ENCODE measurements at regions of chr3 and their contacts with region 1.

Region 1: GRCh38 chr3:55721716-55722484 is 234.8 kb upstream of the WNT5A start:
- DNase-seq: peak; percentile 27
- H3K4me3 ChIP-seq: no peak overlapping the region
- H3K27ac ChIP-seq: no peak overlapping the region
- H3K4me1 ChIP-seq: no peaks in the 10 kb centered on the region
- H3K27me3 ChIP-seq: peaks cover 4% of the 10 kb centered on the region
- CTCF ChIP-seq: peak; percentile 73 to 76

Region 2: DNA sequence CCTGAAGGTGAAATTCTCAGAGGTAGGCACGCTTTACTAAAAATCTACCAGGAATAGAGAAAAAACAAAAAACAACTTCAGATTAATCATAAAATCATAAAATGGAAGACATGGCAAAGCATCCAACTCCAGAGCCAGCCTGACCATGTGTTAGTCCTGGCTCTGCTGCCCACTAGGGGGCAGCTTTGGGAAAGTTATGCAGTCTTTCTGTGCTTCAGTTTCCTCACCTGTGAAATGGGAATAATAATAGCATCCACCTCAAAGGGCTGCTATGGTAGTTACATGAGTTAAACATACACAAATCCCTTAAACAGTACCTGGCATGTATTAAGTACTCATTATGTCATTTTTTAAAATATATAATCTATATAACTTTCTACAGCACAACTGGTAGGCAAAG is 287.1 kb before region 1 on chr3:
- CTCF ChIA-PET with region 1: no interaction called
- dilution Hi-C with region 1: no loop called
- in situ Hi-C with region 1: no loop called
- intact Hi-C with region 1: loop called (anchors 2 kb)
- DNase-seq: peak; percentile 28
- H3K4me3 ChIP-seq: no peak overlapping the region
- H3K27ac ChIP-seq: no peak overlapping the region
- H3K4me1 ChIP-seq: no peaks in the 10 kb centered on the region
- H3K27me3 ChIP-seq: no peaks in the 10 kb centered on the region
- CTCF ChIP-seq: peak; percentile 64 to 75

Region 3: DNA sequence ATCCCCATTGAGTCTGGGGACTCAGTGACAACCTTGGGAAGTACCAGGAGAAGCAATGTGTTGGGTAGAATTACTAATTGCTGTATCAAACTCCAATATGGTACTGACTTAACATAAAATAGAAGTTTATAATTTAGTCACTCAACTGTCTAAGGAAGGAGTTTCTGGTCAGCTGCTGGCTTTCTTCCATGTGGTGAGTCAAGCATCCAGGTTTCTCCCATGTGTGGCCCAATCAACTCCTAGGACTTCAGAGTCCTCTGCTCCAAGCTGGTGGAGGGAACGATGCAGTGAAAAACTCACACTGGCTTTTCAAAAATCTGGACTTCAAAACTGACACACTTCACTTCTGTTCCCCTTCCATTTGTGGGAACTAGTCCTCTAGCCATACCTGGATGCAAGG is 260.0 kb before region 1 on chr3:
- CTCF ChIA-PET with region 1: no interaction called
- dilution Hi-C with region 1: no loop called
- in situ Hi-C with region 1: no loop called
- intact Hi-C with region 1: no loop called
- DNase-seq: peak; percentile 76
- H3K4me3 ChIP-seq: no peak overlapping the region
- H3K27ac ChIP-seq: no peak overlapping the region
- H3K4me1 ChIP-seq: peaks cover 4% of the 10 kb centered on the region
- H3K27me3 ChIP-seq: no peaks in the 10 kb centered on the region
- CTCF ChIP-seq: no peak

Region 4: GRCh38 chr3:55524565-55525244 is 197.2 kb before region 1 on chr3:
- CTCF ChIA-PET with region 1: interaction called, 36 read pairs
- dilution Hi-C with region 1: no loop called
- in situ Hi-C with region 1: no loop called
- intact Hi-C with region 1: no loop called
- DNase-seq: peak; percentile 80
- H3K4me3 ChIP-seq: no peak overlapping the region
- H3K27ac ChIP-seq: peak overlapping the region; percentile 1
- H3K4me1 ChIP-seq: peaks cover 29% of the 10 kb centered on the region
- H3K27me3 ChIP-seq: no peaks in the 10 kb centered on the region
- CTCF ChIP-seq: no peak

Region 5: DNA sequence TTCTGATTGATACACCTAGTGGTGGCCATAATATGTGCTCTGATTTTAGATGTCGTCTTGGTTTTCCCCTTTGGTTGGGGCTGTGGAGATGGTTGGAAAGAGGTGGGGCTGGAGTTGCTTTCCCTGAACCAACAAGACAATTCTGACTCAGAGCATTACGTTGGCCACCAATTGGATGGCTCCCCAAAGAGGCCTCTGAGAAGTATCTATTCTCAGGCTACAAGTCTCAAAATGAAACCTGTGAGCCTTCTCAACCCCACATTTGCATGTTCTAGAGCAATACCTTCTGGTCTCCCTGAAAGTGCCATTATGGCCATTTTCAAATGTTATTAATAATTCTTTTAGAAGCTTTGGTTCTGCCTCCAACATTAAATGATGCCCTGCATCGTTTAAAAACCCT is 46.4 kb before region 1 on chr3:
- CTCF ChIA-PET with region 1: no interaction called
- dilution Hi-C with region 1: no loop called
- in situ Hi-C with region 1: no loop called
- intact Hi-C with region 1: no loop called
- DNase-seq: no peak
- H3K4me3 ChIP-seq: no peak overlapping the region
- H3K27ac ChIP-seq: no peak overlapping the region
- H3K4me1 ChIP-seq: no peaks in the 10 kb centered on the region
- H3K27me3 ChIP-seq: no peaks in the 10 kb centered on the region
- CTCF ChIP-seq: no peak

Measured in mammary epithelial cell (primary cell).